Activated CD4-positive, alpha-beta T cell treated with anti-CD3 and anti-CD28 coated beads, Interleukin-2, amount 10 ng/mL, durations not matched to agents 24 days and 14 days (primary cell): ENCODE measurements at regions of chr20 and their contacts with region 1.

Region 1: GRCh38 chr20:4720041-4720976 is 1.4 kb upstream of the PRND start:
- DNase-seq: peak; percentile 93
- H3K4me3 Mint-ChIP-seq: no peak overlapping the region
- H3K27ac Mint-ChIP-seq: no peak overlapping the region
- H3K4me1 Mint-ChIP-seq: peaks cover 5% of the 10 kb centered on the region
- H3K27me3 Mint-ChIP-seq: peaks cover 6% of the 10 kb centered on the region

Region 2: GRCh38 chr20:4607287-4607713 is 113.0 kb before region 1 on chr20:
- intact Hi-C with region 1: loop called (anchors 1 kb)
- DNase-seq: peak; percentile 89
- H3K4me3 Mint-ChIP-seq: no peak overlapping the region
- H3K27ac Mint-ChIP-seq: no peak overlapping the region
- H3K4me1 Mint-ChIP-seq: no peaks in the 10 kb centered on the region
- H3K27me3 Mint-ChIP-seq: peaks cover 22% of the 10 kb centered on the region

Region 3: GRCh38 chr20:4875578-4876067 is 155.3 kb after region 1 on chr20:
- intact Hi-C with region 1: no loop called
- DNase-seq: no peak
- H3K4me3 Mint-ChIP-seq: no peak overlapping the region
- H3K27ac Mint-ChIP-seq: no peak overlapping the region
- H3K4me1 Mint-ChIP-seq: peaks cover 3% of the 10 kb centered on the region
- H3K27me3 Mint-ChIP-seq: no peaks in the 10 kb centered on the region